Left ventricle myocardium inferior (tissue), 1 donor: ENCODE measurements at regions of chr20 and their contacts with region 1.

Region 1: DNA sequence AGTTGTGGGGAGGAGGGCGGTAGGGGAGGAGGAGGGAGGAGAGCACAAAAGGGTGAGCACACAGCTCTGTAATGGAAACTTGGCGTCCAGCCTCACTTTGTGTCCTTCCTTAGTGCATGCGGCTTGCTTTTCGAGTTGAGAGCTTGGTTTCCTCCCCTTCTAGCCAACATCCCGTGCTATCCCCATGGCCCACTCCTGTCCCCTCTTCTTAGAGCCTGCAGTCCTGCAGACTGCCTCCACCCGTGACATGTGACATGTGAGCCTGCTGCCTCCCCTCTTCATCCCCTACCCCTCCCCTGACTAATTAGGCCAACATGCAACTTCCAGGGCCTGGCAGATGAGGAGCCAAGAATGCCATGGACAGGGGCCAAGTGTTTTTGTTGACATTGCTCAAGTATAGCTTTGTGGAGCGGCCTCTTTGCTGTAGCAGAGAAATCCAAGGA is 63.2 kb downstream of the SLC24A3 start:
- DNase-seq: peak; percentile 59
- H3K4me3 ChIP-seq: no peak overlapping the region
- H3K27ac ChIP-seq: peak overlapping the region; percentile 71
- H3K4me1 ChIP-seq: peaks cover 21% of the 10 kb centered on the region
- H3K27me3 ChIP-seq: peaks cover 6% of the 10 kb centered on the region
- CTCF ChIP-seq: no peak

Region 2: DNA sequence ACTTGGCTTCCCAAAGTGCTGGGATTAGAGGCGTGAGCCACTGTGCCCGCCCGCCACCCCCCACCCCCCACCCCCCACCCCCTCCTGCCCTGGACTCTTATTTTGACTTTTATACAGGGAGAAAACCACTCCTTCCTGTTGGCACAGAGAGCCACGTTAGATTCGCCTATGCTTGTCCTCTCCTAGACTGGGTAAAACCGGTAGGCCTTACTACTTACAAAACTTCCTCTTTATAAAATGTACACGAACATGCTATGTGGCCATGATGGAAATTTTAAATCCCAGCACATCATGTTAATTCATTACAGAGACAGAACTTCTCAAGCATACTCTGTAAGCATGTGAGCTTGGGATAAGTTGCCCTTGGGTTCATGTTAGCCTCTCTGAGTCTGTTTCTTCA is 61.0 kb after region 1 on chr20:
- intact Hi-C with region 1: loop called (anchors 10 kb)
- DNase-seq: no peak
- H3K4me3 ChIP-seq: no peak overlapping the region
- H3K27ac ChIP-seq: no peak overlapping the region
- H3K4me1 ChIP-seq: peaks cover 7% of the 10 kb centered on the region
- H3K27me3 ChIP-seq: peaks cover 16% of the 10 kb centered on the region
- CTCF ChIP-seq: no peak

Region 3: GRCh38 chr20:19397666-19398065 is 122.0 kb after region 1 on chr20:
- intact Hi-C with region 1: no loop called
- DNase-seq: no peak
- H3K4me3 ChIP-seq: no peak overlapping the region
- H3K27ac ChIP-seq: no peak overlapping the region
- H3K4me1 ChIP-seq: no peaks in the 10 kb centered on the region
- H3K27me3 ChIP-seq: peaks cover 1% of the 10 kb centered on the region
- CTCF ChIP-seq: no peak